BJ (cell line): ENCODE measurements at regions of chr19 and their contacts with region 1.

Region 1: GRCh38 chr19:12139885-12140547 is at the start of gene ZNF20:
- DNase-seq: peak; percentile 66
- H3K4me3 ChIP-seq: peak within 1 kb of the TSS; percentile 78
- H3K27me3 ChIP-seq: no peaks in the 10 kb centered on the region
- CTCF ChIP-seq: no peak
- polyA plus RNA-seq, gene ZNF20: 2.1 and 2.8 TPM in 2 replicates

Region 2: DNA sequence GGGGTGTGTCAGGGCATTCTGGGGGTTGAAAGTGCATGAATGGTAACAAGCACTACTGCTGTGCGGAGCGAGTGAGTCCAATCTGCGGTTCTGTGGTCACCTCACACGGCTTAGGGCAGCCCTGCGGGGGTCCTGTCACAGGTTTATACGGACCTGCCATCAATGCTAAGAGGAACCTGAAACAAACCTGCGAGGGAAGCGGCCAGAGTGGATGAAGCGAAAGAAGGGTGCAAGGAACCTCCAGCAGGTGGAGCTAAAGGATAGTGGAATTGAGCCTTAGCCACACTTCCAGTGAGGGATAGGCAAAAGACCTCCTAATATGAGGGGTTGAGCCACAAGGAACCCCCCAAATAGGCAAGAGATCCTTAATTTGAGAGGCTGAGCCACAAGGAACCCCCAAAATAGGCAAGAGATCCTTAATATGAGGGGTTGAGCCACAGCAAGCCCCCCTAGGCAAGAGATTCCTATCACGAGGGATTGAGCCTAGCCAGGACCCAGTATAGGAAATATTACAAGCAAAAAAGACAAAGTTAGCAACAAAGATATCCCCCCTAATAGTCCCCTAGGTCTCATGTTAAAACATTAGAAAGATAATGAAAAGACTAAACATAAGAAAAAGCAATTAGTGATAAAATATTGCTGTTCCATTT is 258.7 kb before region 1 on chr19:
- CTCF ChIA-PET with region 1: interaction called, 18 read pairs
- POLR2A ChIA-PET with region 1: no interaction called
- DNase-seq: no peak
- H3K4me3 ChIP-seq: no peak overlapping the region
- H3K27me3 ChIP-seq: no peaks in the 10 kb centered on the region; the same call in 1 of the 2 replicates
- CTCF ChIP-seq: peak; percentile 77

Region 3: GRCh38 chr19:12052497-12053169 is 87.4 kb before region 1 on chr19 and contains the start of gene ZNF878:
- CTCF ChIA-PET with region 1: interaction called, 11 read pairs
- POLR2A ChIA-PET with region 1: no interaction called
- DNase-seq: peak; percentile 42
- H3K4me3 ChIP-seq: peak within 1 kb of the TSS; percentile 77
- H3K27me3 ChIP-seq: no peaks in the 10 kb centered on the region
- CTCF ChIP-seq: 0 out of 2 replicates have a peak, but pooled peaks have one; percentile 7
- polyA plus RNA-seq, gene ZNF878: not detected in 2 replicates

Region 4: GRCh38 chr19:12092065-12092867 is 47.8 kb before region 1 on chr19:
- CTCF ChIA-PET with region 1: interaction called, 35 read pairs
- POLR2A ChIA-PET with region 1: no interaction called
- DNase-seq: peak; percentile 47
- H3K4me3 ChIP-seq: peak overlapping the region; percentile 64
- H3K27me3 ChIP-seq: no peaks in the 10 kb centered on the region
- CTCF ChIP-seq: no peak

Region 5: DNA sequence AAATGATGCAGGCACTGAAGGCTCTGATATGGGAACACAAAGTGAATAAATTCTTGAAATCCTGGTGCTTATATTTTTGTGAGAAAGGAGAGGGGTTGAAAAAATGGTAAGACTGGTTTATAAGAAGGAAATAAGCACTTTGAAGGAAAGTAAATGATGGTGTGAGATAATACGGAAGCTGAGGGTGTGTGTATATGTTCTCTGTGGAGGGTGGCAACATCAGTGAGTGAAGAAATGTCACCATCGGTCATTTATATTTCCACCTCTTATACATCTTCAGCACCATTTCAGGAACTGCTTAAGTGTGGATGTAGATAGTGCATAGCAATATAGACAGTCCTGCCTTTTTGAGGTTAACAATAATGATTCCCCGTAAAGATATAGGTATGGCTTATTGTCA is 40.4 kb after region 1 on chr19:
- CTCF ChIA-PET with region 1: no interaction called
- POLR2A ChIA-PET with region 1: no interaction called
- DNase-seq: no peak
- H3K4me3 ChIP-seq: no peak overlapping the region
- H3K27me3 ChIP-seq: no peaks in the 10 kb centered on the region
- CTCF ChIP-seq: no peak

Region 6: DNA sequence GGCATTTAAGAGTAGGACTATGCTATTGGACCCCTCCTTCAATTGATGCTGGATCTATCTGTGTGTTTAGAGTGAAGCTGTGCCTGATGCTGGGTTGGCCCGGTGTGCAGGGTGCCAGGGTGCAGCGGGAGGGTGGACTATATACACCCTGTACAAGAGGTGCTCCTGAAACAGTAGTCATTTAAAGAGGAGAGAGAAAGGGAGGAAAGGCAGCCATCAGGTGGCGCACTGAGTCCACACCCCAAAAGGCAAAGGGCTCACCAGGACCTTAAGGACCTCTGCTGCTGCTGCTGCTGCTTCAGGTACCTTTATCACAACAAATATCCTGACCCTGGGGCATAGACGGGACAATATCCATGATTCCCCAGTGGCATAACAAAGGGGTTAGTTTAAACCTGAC is 62.2 kb after region 1 on chr19:
- CTCF ChIA-PET with region 1: no interaction called
- POLR2A ChIA-PET with region 1: no interaction called
- DNase-seq: no peak
- H3K4me3 ChIP-seq: no peak overlapping the region
- H3K27me3 ChIP-seq: no peaks in the 10 kb centered on the region
- CTCF ChIP-seq: no peak

Region 7: DNA sequence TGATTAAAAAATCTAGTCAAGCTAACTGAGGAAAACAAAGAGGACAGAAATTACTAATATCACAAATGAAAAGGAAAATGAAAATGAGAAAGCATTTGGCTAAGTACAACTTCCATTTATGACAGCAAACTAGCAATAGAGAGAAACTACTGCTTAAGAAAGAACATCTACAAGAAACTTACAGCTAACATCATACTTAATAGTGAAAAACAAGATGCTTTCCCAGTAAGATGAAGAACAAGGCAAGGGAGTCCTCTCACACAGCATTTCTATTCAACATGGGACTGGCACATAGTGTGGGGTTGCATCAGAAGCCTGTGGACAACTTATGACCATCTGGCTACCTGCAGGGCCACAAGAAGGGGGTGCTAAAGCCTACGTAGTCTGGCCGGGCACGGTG is 115.4 kb after region 1 on chr19:
- CTCF ChIA-PET with region 1: no interaction called
- POLR2A ChIA-PET with region 1: no interaction called
- DNase-seq: no peak
- H3K4me3 ChIP-seq: no peak overlapping the region
- H3K27me3 ChIP-seq: no peaks in the 10 kb centered on the region
- CTCF ChIP-seq: no peak